ENCODE measurements at regions of chr12 and their contacts with region 1.

Region 1: DNA sequence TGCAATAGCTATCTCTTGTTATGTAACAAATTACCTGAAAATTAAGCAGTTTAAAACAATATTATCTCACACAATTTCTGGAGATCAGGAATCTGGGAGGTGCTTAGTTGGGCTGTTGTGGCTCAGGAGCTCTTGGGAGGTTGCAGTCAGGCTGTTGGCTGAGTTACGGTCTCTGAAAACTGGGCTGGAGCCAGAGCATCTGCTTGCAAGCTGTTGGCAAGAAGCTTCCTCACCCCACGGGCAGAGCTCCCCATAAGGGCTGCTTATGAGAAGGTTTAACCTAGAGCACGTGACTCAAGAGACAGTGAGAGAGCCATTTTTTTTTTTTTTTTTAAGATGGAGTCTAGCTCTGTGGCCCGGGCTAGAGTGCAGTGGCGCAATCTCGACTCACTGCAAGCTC is 346.8 kb downstream of the ATP23 start:
- DNase-seq: peak; percentile 44
- ATAC-seq: peak; percentile 16

Region 2: GRCh38 chr12:58105225-58106119 is 182.7 kb before region 1 on chr12:
- intact Hi-C with region 1: loop called (anchors 10 kb)
- DNase-seq: no peak
- ATAC-seq: peak; percentile 74

Measured in Right ventricle myocardium inferior (tissue), 1 donor.